ENCODE measurements at regions of chr2 and their contacts with region 1.

Region 1: GRCh38 chr2:201071479-201072200 is at the starts of genes HYCC2 and NDUFB3:
- DNase-seq: peak; percentile 90
- H3K4me3 ChIP-seq: peak within 1 kb of the TSS; percentile 36 to 87 (median 38)
- H3K27ac ChIP-seq: peak within 1 kb of the TSS; percentile 81 to 90 (median 86)
- H3K4me1 ChIP-seq: peaks cover 23 to 33% of the 10 kb centered on the region in 2 donors
- H3K27me3 ChIP-seq: no peaks in the 10 kb centered on the region
- CTCF ChIP-seq: peak in 4 of 6 experiments; percentile 27 to 43 (median 33)
- POLR2A ChIP-seq: peak in 1 of 2 donors; percentile 85
- total RNA-seq, gene HYCC2: 19.8 to 32.0 (median 26.0) TPM
- total RNA-seq, gene NDUFB3: 42.4 to 95.2 (median 86.5) TPM

Region 2: GRCh38 chr2:200713003-200713703 is 358.5 kb before region 1 on chr2:
- intact Hi-C with region 1: loop called (anchors 10 kb)
- DNase-seq: peak; percentile 73 to 79
- H3K4me3 ChIP-seq: peak overlapping the region in 1 of 3 donors; percentile 8
- H3K27ac ChIP-seq: peak overlapping the region; percentile 11 to 43 (median 30)
- H3K4me1 ChIP-seq: peaks cover 0 to 4% of the 10 kb centered on the region in 2 donors
- H3K27me3 ChIP-seq: no peaks in the 10 kb centered on the region
- CTCF ChIP-seq: peak; percentile 25 to 82 (median 78)
- POLR2A ChIP-seq: peak in 1 of 2 donors; percentile 76

Region 3: DNA sequence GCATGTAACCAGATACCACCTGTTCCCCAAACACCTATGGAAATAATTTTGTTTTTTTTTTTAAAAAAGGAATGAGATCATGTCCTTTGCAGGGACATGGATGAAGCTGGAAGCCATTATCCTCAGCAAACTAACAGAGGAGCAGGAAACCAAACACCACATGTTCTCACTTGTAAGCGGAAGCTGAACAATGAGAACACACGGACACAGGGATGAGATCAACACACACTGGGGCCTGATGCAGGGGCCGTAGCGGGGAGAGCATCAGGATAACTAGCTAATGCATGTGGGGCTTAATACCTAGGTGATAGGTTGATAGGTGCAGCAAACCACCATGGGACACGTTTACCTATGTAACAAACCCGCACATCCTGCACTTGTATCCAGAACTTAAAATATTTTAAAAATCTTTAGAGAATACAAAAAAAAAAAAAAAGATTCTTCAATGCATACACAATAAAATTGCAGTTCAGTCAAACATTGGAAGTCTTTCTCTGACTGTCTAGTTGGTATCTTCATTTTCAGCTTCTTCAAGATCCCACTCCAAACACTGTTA is 99.7 kb after region 1 on chr2:
- intact Hi-C with region 1: loop called (anchors 10 kb)
- DNase-seq: no peak
- H3K4me3 ChIP-seq: no peak overlapping the region
- H3K27ac ChIP-seq: no peak overlapping the region
- H3K4me1 ChIP-seq: peaks cover 4 to 7% of the 10 kb centered on the region in 2 donors
- H3K27me3 ChIP-seq: no peaks in the 10 kb centered on the region
- CTCF ChIP-seq: no peak
- POLR2A ChIP-seq: no peak